ENCODE measurements at regions of chr17 and their contacts with region 1.

Region 1: GRCh38 chr17:79810130-79811010 is 13.5 kb upstream of the CBX8 start:
- H3K4me3 ChIP-seq: peak overlapping the region; percentile 37
- H3K27ac ChIP-seq: peak overlapping the region; percentile 76
- H3K4me1 ChIP-seq: peaks cover 17% of the 10 kb centered on the region
- CTCF ChIP-seq: no peak

Region 2: GRCh38 chr17:79789534-79790353 is 20.6 kb before region 1 on chr17:
- CTCF ChIA-PET with region 1: interaction called, 18 read pairs
- POLR2A ChIA-PET with region 1: interaction called, 8 read pairs
- H3K4me3 ChIP-seq: no peak overlapping the region
- H3K27ac ChIP-seq: no peak overlapping the region; the same call in 1 of the 2 replicates
- H3K4me1 ChIP-seq: peaks cover 12% of the 10 kb centered on the region
- CTCF ChIP-seq: no peak

Region 3: DNA sequence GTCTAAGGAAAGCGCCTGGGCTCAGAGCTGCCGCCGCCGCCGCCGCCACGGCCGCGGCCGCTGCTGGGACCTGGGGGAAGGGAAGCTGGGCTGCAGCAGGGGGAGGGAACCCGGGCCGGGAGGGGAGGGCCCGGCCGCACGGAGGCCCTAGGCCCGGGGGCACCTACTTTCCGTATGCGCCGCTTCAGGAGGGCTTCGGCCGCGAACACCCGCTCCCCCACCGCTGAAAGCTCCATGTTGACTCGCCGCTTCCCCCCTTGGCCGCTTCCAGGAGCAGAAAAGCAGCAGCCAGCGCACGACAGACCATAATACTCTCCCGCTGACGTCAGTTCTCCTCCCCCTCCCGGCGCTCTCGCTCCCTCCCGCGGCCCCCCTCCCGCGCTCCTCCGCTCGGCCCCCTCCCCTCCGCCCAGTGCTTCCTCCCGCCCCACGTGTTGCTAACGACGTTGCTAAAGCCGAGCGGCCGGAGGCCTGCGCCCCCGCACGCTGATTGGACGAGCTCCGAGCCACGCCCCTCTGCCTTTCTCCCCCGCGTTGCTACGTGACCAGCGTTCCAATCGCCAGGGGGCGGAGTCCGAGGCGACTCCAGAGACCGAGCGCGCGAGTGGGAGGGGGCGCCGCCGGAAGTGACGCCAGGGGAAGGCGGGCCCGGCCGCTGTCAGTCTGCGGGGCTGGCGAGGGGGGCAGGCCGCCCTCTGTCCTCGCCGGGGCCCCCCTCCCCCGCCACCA is 13.4 kb before region 1 on chr17 and contains the start of gene CBX8:
- CTCF ChIA-PET with region 1: interaction called, 5 read pairs
- POLR2A ChIA-PET with region 1: interaction called, 61 read pairs
- H3K4me3 ChIP-seq: peak within 1 kb of the TSS; percentile 95
- H3K27ac ChIP-seq: peak within 1 kb of the TSS; percentile 88
- H3K4me1 ChIP-seq: peaks cover 30% of the 10 kb centered on the region
- CTCF ChIP-seq: no peak; the same call in 1 of the 2 replicates

Region 4: DNA sequence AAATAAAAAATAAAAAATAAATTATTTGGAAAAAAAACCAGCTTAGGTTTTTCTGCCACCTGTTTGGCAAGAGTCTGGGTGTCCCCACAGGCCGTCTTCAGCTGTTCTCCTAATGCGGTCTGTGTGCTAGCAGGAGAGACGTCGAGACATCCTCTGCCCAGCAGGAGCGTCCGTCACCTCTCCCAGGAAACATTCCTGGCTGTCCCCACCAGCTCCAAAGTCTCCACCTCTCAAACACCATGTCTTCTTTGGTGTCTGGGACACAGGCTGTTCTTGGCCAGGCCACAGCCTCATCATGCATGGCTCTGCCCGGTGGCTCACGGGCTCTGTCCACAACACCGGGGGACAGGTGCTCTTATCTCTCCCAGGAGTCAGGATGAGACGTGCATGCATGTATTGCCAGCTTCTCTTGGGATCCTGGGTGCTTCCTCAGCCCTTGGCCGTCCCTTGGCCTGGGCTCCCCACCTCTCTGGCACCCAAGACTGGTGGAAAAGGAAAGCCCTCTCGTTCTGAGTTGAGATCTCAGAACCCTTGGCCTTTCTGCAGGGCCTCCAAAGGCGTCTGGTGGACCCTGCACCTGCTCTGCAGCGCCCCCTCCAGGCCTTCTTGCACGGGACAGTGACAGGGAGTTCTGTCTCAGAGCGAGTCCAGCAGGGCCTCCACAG is 113.7 kb after region 1 on chr17:
- CTCF ChIA-PET with region 1: interaction called, 14 read pairs
- POLR2A ChIA-PET with region 1: no interaction called
- H3K4me3 ChIP-seq: no peak overlapping the region
- H3K27ac ChIP-seq: no peak overlapping the region
- H3K4me1 ChIP-seq: peaks cover 2% of the 10 kb centered on the region; the same call in 1 of the 2 replicates
- CTCF ChIP-seq: peak; percentile 62

Region 5: DNA sequence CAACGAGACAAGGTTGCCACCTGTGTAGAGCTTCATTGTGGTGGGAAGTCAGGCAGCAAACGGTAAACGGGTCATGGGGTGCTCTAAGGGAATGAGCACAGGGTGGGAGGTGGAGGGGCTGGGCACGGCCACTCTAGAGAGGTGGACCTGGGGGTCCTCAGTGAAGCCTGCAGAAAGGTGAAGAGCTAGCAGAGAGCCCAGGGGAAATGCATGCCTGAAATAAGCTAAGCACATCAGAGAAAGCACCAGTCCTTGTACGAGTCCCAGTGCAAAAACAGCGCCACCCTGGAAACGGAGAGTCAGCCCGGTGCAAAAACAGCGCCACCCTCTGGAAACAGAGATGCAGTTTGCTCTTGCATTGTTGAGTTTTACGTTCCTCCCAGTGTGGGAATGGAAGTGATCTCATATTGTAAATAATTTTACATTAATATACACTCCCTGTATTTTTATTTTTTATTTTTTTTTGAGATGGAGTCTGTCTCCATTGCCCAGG is 160.3 kb after region 1 on chr17:
- CTCF ChIA-PET with region 1: interaction called, 10 read pairs
- POLR2A ChIA-PET with region 1: no interaction called
- H3K4me3 ChIP-seq: no peak overlapping the region
- H3K27ac ChIP-seq: no peak overlapping the region
- H3K4me1 ChIP-seq: no peaks in the 10 kb centered on the region
- CTCF ChIP-seq: peak; percentile 69

Region 6: GRCh38 chr17:79991140-79991923 is 181.0 kb after region 1 on chr17:
- CTCF ChIA-PET with region 1: interaction called, 18 read pairs
- POLR2A ChIA-PET with region 1: no interaction called
- H3K4me3 ChIP-seq: no peak overlapping the region
- H3K27ac ChIP-seq: peak overlapping the region; percentile 85; the same call in 1 of the 2 replicates
- H3K4me1 ChIP-seq: peaks cover 36% of the 10 kb centered on the region
- CTCF ChIP-seq: no peak